CD4-positive, alpha-beta memory T cell (primary cell): ENCODE measurements at regions of chr9 and their contacts with region 1.

Region 1: DNA sequence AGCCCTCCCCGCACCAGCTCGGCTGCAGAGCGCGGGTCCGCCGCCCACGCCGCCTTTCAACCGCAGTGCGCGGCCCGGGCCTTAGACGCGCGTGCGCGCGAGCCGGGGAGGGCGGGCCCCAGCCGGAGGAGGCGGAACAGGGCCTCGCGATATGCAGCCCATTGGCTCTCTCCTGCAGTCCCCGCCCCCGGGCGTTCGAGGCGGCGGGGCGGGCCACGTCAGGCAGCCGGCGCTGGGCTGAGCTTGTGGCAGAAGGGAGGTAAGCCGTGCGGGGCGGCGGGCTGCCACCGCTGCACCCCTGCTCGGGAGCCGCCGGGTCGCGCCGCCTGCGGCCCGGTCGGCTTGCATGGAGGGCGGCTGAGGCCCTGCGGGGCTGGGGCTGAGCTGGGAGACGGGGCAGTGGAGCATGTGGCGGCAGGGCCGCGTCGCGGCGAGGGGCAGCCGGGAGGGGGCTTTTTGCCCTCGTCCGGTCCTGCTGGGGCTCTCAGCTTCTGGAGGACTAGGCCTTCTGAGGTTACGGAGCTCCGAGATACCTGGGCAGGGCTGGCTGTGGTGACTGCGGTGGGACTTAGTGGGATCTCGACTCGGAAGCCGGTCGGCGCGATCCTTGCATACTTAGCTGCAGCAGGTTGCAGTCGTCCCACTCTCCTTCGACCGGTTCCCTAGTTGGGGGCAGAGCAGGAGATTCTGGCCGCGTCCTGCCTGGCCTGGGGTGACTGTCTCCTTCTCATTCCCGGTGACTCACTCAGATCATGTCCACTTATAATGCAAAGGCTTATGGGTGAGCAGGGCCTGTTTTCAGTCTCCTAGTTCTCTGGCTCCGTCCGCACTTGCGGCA is at the start of gene FOCAD:
- DNase-seq: peak; percentile 94 to 96 (median 96)
- H3K4me3 ChIP-seq: peak within 1 kb of the TSS; percentile 86 to 96
- H3K4me3 Mint-ChIP-seq: peak within 1 kb of the TSS; percentile 90 to 96 (median 94)
- H3K27ac ChIP-seq: peak within 1 kb of the TSS; percentile 80
- H3K27ac Mint-ChIP-seq: peak within 1 kb of the TSS; percentile 83 to 95 (median 90)
- H3K4me1 ChIP-seq: peaks cover 22% of the 10 kb centered on the region
- H3K4me1 Mint-ChIP-seq: peaks cover 11 to 20% (median 16%) of the 10 kb centered on the region in 4 donors
- H3K27me3 ChIP-seq: no peaks in the 10 kb centered on the region
- H3K27me3 Mint-ChIP-seq: no peaks in the 10 kb centered on the region
- total RNA-seq, gene FOCAD: 18.8 to 20.6 TPM

Region 2: GRCh38 chr9:20356403-20357035 is 327.7 kb before region 1 on chr9:
- CTCF ChIA-PET with region 1: no interaction called
- POLR2A ChIA-PET with region 1: interaction called, 3 read pairs
- intact Hi-C with region 1: loop called (anchors 10 kb)
- DNase-seq: peak; percentile 34 to 51 (median 42)
- H3K4me3 ChIP-seq: no peak overlapping the region
- H3K4me3 Mint-ChIP-seq: no peak overlapping the region
- H3K27ac ChIP-seq: no peak overlapping the region
- H3K27ac Mint-ChIP-seq: peak overlapping the region in 5 of 7 donors; percentile 5 to 82 (median 68)
- H3K4me1 ChIP-seq: peaks cover 9% of the 10 kb centered on the region
- H3K4me1 Mint-ChIP-seq: peaks cover 13 to 55% (median 24%) of the 10 kb centered on the region in 4 donors
- H3K27me3 ChIP-seq: no peaks in the 10 kb centered on the region
- H3K27me3 Mint-ChIP-seq: no peaks in the 10 kb centered on the region

Region 3: DNA sequence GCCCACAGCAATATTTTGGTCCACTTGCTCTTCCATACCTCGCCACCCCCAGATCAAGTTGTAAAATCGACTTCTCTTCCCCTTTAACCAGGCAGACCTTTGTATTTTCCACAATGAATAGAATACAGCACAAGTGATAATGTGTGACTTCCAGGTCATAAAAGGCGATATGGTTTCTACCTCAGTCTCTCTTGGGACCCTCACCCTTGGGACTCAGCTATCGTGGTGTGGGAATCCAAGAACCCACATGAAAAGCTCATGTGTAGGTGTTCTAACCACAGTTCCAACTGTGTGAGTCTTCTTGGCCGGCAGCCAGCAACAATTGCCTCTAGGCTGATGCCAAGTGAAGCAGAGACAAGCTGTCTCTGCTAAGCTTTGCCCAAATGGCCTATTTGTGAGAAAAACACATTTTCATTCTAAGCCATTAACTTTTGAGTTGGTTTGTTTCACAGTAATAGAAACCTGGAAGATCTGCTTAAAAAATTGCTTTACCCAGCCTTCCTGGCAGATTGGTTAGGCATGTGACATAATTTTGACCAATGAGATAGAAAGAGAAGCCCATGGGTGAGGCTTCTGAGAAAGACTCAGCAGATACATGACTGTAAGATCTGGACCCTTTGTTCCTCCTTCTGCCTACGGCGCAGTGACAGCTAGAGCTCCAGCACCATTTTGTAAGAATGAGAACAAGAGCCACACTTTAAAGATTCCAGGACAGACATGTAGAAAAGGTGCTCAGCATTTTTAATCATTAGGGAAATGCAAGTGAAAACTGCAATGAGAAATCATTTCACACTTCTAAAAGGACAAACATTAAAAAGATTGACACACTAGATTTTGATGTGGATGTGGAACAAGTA is 43.7 kb before region 1 on chr9:
- CTCF ChIA-PET with region 1: interaction called, 3 read pairs
- POLR2A ChIA-PET with region 1: interaction called, 11 read pairs
- intact Hi-C with region 1: loop called (anchors 1 kb)
- DNase-seq: peak; percentile 71 to 85 (median 73)
- H3K4me3 ChIP-seq: no peak overlapping the region
- H3K4me3 Mint-ChIP-seq: peak overlapping the region in 7 of 8 donors; percentile 43 to 81 (median 63)
- H3K27ac ChIP-seq: no peak overlapping the region
- H3K27ac Mint-ChIP-seq: peak overlapping the region; percentile 17 to 81 (median 67)
- H3K4me1 ChIP-seq: peaks cover 18% of the 10 kb centered on the region
- H3K4me1 Mint-ChIP-seq: peaks cover 11 to 16% (median 13%) of the 10 kb centered on the region in 4 donors
- H3K27me3 ChIP-seq: no peaks in the 10 kb centered on the region
- H3K27me3 Mint-ChIP-seq: peaks cover 0 to 5% of the 10 kb centered on the region in 2 donors

Region 4: GRCh38 chr9:20658677-20659473 is 25.4 kb before region 1 on chr9:
- CTCF ChIA-PET with region 1: no interaction called
- POLR2A ChIA-PET with region 1: interaction called, 14 read pairs
- intact Hi-C with region 1: loop called (anchors 1 kb)
- DNase-seq: no peak
- H3K4me3 ChIP-seq: peak overlapping the region in 1 of 2 donors; percentile 55
- H3K4me3 Mint-ChIP-seq: peak overlapping the region in 2 of 8 donors; percentile 90 to 91
- H3K27ac ChIP-seq: peak overlapping the region; percentile 26
- H3K27ac Mint-ChIP-seq: peak overlapping the region in 6 of 7 donors; percentile 7 to 87 (median 79)
- H3K4me1 ChIP-seq: peaks cover 36% of the 10 kb centered on the region
- H3K4me1 Mint-ChIP-seq: peaks cover 7 to 11% (median 8%) of the 10 kb centered on the region in 4 donors
- H3K27me3 ChIP-seq: no peaks in the 10 kb centered on the region
- H3K27me3 Mint-ChIP-seq: peaks cover 0 to 1% of the 10 kb centered on the region in 2 donors